PC-3 (cell line): ENCODE measurements at regions of chr3 and their contacts with region 1.

Region 1: DNA sequence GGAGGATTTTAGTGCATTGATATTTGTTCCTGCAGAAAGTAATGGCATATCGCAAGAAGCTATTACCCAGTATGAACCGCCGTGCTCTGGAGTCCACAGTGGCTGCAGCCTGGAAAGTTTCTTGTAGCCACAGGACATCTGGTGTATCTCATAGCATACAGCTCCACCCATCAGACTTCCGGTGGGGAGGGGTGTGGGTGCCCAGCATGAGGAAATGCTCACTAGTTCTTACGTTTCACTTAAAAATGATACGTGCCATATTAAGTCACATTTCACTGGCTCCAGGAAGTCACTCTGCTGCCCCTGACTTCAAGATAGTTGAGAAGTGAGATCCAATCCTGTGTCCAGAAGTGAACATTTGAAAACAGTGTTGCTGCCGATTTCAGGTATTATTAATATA is 990.4 kb downstream of the GBE1 start:
- DNase-seq: peak; percentile 64
- ATAC-seq: peak; percentile 64
- H3K4me3 ChIP-seq: peak overlapping the region; percentile 79
- H3K27ac ChIP-seq: peak overlapping the region; percentile 38
- H3K4me1 ChIP-seq: 0 out of 2 replicates have a peak, but pooled peaks cover 6% of the 10 kb centered on the region
- H3K27me3 ChIP-seq: no peaks in the 10 kb centered on the region
- CTCF ChIP-seq: no peak

Region 2: GRCh38 chr3:79986338-79986737 is 784.7 kb before region 1 on chr3:
- CTCF ChIA-PET with region 1: no interaction called
- POLR2A ChIA-PET with region 1: interaction called, 23 read pairs
- intact Hi-C with region 1: no loop called
- DNase-seq: no peak
- ATAC-seq: peak; percentile 65; the same call in 1 of the 2 replicates
- H3K4me3 ChIP-seq: no peak overlapping the region
- H3K27ac ChIP-seq: peak overlapping the region; percentile 93
- H3K4me1 ChIP-seq: peaks cover 23% of the 10 kb centered on the region
- H3K27me3 ChIP-seq: no peaks in the 10 kb centered on the region
- CTCF ChIP-seq: no peak

Region 3: DNA sequence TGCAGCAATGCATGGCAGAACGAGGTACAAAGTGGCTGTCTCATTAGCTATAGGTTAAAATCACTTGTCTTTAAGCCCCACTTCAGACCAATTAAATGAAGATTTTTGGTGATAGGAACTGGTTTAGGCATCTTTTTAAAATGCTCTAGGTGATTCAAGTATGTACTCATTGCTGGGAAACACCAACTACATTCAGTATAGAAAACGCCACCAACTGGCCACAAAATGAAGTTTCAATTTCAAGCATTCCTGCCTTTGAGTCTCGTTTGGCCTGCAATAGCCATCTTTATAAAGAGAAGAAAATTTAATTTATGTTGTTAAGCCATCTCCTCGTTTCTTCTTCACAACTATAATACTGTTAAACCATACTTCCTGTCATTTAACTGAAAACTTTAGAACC is 402.4 kb after region 1 on chr3:
- CTCF ChIA-PET with region 1: no interaction called
- POLR2A ChIA-PET with region 1: no interaction called
- intact Hi-C with region 1: loop called (anchors 1 kb)
- DNase-seq: peak; percentile 66
- ATAC-seq: peak; percentile 76
- H3K4me3 ChIP-seq: no peak overlapping the region
- H3K27ac ChIP-seq: no peak overlapping the region
- H3K4me1 ChIP-seq: no peaks in the 10 kb centered on the region
- H3K27me3 ChIP-seq: no peaks in the 10 kb centered on the region
- CTCF ChIP-seq: peak; percentile 78

Region 4: DNA sequence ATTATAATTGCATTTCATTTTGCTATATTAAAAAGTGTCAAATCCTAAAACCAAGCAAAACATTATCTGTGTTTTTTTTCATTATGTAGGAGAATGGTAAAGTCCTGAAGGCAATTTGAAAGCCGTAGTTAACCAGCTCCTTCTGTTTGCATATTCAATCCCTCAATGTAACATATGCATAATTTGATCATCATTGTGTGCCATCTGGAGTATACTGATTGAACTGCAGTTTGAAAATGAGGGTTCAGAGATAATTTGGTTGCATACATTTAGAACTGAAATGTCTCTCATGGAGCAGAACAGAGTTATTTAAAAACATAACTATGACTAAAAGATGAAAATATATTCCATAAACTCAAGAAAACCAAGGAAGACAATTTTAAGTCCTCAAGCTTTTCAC is 471.8 kb after region 1 on chr3:
- CTCF ChIA-PET with region 1: interaction called, 5 read pairs
- POLR2A ChIA-PET with region 1: no interaction called
- intact Hi-C with region 1: loop called (anchors 2 kb)
- DNase-seq: peak; percentile 70
- ATAC-seq: peak; percentile 65
- H3K4me3 ChIP-seq: no peak overlapping the region
- H3K27ac ChIP-seq: no peak overlapping the region
- H3K4me1 ChIP-seq: no peaks in the 10 kb centered on the region
- H3K27me3 ChIP-seq: no peaks in the 10 kb centered on the region
- CTCF ChIP-seq: peak; percentile 82

Region 5: DNA sequence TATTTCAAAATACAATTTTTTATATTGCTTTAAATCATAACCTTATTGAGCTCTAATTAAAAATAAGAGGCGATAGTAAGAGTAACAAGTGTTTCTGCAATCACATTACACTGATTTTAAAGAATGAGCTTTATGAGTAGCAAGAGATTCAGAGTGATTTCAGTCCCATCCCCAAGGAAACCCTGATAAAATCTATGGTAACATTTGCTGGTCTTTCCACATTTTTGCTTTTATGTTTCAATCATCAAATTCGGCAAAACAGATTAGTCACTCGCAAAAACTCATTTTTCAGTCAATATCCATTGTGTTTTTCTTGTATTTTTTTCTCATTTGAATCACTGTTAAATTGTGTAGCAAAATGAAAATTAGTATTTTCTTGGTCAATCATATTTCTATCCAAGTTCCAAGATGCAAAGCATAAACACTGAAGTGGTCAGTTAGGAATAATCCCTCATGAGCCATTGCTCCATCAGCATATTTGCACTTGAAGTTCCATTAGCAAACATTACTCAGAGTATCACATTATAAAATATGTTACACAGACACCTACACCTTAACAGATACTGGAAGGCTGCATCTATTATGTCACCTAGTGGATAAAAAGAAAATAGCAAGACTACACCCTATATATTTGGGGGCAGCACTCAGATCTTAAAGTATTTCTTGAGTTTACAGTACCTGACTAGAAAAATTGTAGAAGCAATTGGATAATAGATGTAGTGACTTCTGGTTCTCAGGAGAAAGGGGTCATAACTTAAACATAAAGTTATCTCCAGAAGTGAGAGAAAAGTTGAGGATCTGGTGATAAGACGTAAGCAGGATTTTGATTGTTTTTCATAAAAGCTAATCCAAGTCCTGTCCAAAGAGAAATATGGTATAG is 567.8 kb after region 1 on chr3:
- CTCF ChIA-PET with region 1: no interaction called
- POLR2A ChIA-PET with region 1: no interaction called
- intact Hi-C with region 1: loop called (anchors 5 kb)
- DNase-seq: peak; percentile 88
- ATAC-seq: peak; percentile 85
- H3K4me3 ChIP-seq: peak overlapping the region; percentile 8; the same call in 1 of the 2 replicates
- H3K27ac ChIP-seq: peak overlapping the region; percentile 3
- H3K4me1 ChIP-seq: peaks cover 24% of the 10 kb centered on the region
- H3K27me3 ChIP-seq: no peaks in the 10 kb centered on the region
- CTCF ChIP-seq: peak; percentile 92